ENCODE measurements at regions of chr4 and their contacts with region 1.

Region 1: DNA sequence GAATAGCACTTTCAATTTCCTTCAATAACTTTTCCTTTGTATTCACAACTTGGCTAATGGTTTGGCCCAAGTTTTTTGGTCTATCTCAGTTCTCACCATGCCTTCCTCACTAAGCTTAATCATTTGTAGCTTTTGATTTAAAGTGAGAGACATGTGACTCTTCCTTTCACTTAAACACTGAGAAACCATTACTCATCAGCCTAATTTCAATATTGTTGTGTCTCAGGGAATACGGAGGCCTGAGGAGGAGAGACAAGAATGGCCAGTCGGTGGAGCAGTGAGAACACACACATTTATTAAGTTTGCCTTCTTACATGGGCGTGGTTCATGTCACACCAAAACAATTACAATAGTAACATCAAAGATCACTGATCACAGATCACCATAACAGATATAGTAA is 56.7 kb downstream of the TSPAN5 start:
- DNase-seq: no peak
- H3K4me3 Mint-ChIP-seq: peak overlapping the region; percentile 73
- H3K27ac Mint-ChIP-seq: peak overlapping the region; percentile 90
- H3K4me1 Mint-ChIP-seq: peaks cover 60% of the 10 kb centered on the region
- H3K27me3 Mint-ChIP-seq: no peaks in the 10 kb centered on the region

Region 2: GRCh38 chr4:98394134-98394533 is 207.6 kb before region 1 on chr4:
- intact Hi-C with region 1: no loop called
- DNase-seq: no peak
- H3K4me3 Mint-ChIP-seq: no peak overlapping the region
- H3K27ac Mint-ChIP-seq: peak overlapping the region; percentile 67
- H3K4me1 Mint-ChIP-seq: peaks cover 4% of the 10 kb centered on the region
- H3K27me3 Mint-ChIP-seq: no peaks in the 10 kb centered on the region

Region 3: GRCh38 chr4:98406819-98407218 is 194.9 kb before region 1 on chr4:
- intact Hi-C with region 1: loop called (anchors 1 kb)
- DNase-seq: no peak
- H3K4me3 Mint-ChIP-seq: no peak overlapping the region
- H3K27ac Mint-ChIP-seq: no peak overlapping the region
- H3K4me1 Mint-ChIP-seq: peaks cover 25% of the 10 kb centered on the region
- H3K27me3 Mint-ChIP-seq: no peaks in the 10 kb centered on the region

Region 4: DNA sequence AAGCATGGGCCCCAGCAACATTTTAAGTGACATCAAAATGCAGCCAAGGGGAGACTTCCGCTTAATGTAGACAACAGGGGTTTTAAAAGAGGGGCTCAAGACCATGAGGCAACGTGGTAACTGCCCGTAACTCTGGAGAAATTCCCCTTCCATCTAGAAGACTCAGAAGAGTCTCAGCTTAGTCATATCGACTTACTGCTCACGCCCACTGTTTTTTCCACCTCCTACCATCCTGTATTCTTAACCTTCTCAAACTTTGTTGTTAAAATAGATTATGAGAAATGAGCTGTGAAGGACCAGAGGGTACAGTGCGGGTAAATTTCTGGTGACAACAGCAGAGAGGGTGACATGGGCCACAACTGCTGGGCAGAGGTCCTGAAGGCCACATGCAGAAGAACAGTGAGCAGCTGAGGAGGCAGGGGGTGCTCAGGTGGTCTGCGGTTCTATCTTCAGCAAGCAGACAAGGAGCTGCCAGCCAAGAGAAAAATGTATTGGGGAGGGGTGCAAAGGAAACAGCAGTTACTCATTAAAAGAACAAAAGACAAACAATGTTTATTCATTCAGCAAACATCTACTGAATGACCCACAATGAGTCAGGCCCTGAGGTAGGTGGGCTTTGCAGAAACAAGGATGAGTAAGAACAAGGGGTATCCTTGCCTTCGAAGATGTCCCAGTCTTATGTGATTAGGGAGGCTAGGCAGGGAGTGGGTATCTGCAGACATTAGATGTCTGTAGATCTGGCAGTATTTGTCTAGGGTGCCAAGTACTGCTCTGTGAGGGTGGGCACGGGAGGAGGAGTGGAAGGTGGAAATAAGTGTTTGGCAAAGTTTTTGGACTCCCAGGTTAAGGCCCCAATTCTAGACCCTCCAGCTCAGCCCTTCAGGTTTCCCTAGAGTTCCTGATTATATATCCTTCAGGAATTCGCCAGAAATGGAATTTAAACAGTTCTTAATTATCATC is 118.6 kb before region 1 on chr4:
- intact Hi-C with region 1: loop called (anchors 1 kb)
- DNase-seq: peak; percentile 40
- H3K4me3 Mint-ChIP-seq: peak overlapping the region; percentile 72
- H3K27ac Mint-ChIP-seq: peak overlapping the region; percentile 98
- H3K4me1 Mint-ChIP-seq: peaks cover 92% of the 10 kb centered on the region
- H3K27me3 Mint-ChIP-seq: no peaks in the 10 kb centered on the region

Region 5: DNA sequence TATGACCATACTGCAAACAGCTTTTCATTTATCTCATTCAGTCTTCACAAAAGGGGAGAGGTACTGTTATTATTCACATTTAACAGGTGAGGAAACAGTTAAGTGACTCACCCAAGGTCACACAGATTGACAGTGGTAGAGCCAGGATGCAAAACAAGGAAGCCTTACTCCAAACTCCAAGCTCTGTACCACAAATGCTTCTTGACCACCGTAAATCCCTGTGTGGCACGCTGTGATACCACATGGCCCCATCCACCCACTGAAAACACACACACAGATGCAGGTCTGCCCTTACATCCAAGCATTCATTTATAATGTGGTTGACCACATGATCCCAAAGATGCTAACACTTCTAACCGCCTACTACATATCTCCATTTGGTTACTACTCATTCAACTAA is 72.8 kb before region 1 on chr4:
- intact Hi-C with region 1: loop called (anchors 2 kb)
- DNase-seq: no peak
- H3K4me3 Mint-ChIP-seq: peak overlapping the region; percentile 9
- H3K27ac Mint-ChIP-seq: peak overlapping the region; percentile 64
- H3K4me1 Mint-ChIP-seq: peaks cover 54% of the 10 kb centered on the region
- H3K27me3 Mint-ChIP-seq: no peaks in the 10 kb centered on the region

Region 6: GRCh38 chr4:98706200-98706813 is 104.6 kb after region 1 on chr4:
- intact Hi-C with region 1: loop called (anchors 2 kb)
- DNase-seq: peak; percentile 42
- H3K4me3 Mint-ChIP-seq: peak overlapping the region; percentile 68
- H3K27ac Mint-ChIP-seq: peak overlapping the region; percentile 79
- H3K4me1 Mint-ChIP-seq: peaks cover 27% of the 10 kb centered on the region
- H3K27me3 Mint-ChIP-seq: peaks cover 1% of the 10 kb centered on the region

Region 7: GRCh38 chr4:99847362-99847976 is 1245.8 kb after region 1 on chr4:
- intact Hi-C with region 1: loop called (anchors 5 kb)
- DNase-seq: no peak
- H3K4me3 Mint-ChIP-seq: peak overlapping the region; percentile 59
- H3K27ac Mint-ChIP-seq: peak overlapping the region; percentile 95
- H3K4me1 Mint-ChIP-seq: peaks cover 83% of the 10 kb centered on the region
- H3K27me3 Mint-ChIP-seq: no peaks in the 10 kb centered on the region